PC-9 (cell line): ENCODE measurements at regions of chr17 and their contacts with region 1.

Region 1: DNA sequence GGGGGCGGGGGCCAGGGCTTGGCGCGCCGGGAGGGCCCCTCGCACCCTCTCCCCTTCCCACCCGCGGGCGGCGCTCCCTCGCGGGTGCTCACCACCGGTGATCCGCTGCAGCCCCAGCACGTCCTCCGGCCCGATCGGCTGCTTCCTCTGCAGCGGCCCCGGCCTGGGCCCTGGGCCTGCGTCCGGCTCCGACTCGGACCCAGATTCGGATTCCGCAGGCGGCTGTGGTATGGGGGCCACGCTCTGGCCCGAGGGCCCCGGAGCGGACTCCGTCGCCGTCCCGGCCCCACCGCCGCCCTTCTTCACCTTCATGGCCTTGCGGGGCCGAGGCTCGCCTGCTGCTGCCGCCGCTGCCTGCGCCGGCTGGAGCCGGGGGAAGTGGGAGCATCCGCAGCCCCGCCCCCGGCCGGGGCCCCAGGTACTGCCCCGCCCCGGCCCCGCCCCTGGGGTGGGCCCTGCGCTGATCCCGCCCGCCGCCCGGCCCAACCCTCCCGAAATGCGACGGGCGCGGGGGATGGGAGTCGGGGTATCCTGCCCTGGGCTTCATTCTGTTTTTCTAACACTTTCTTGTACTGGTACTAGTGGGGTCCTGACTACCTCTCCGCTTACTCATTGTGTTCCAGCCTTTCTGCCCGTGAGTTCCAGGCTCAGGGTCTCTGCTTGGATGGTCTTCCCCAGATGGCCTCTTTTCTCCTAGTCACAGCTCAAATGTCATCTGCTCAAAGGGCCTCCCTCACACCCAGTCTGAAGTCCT is at the start of gene UNC119:
- DNase-seq: peak in 1 of 2 experiments; percentile 78
- H3K4me3 ChIP-seq: peak within 1 kb of the TSS; percentile 74
- H3K27ac ChIP-seq: no peak within 1 kb of the TSS
- H3K4me1 ChIP-seq: peaks cover 7% of the 10 kb centered on the region; the same call in 1 of the 2 replicates
- H3K27me3 ChIP-seq: no peaks in the 10 kb centered on the region
- CTCF ChIP-seq: no peak
- total RNA-seq, gene UNC119: 39.7 and 48.8 TPM in 2 replicates

Region 2: DNA sequence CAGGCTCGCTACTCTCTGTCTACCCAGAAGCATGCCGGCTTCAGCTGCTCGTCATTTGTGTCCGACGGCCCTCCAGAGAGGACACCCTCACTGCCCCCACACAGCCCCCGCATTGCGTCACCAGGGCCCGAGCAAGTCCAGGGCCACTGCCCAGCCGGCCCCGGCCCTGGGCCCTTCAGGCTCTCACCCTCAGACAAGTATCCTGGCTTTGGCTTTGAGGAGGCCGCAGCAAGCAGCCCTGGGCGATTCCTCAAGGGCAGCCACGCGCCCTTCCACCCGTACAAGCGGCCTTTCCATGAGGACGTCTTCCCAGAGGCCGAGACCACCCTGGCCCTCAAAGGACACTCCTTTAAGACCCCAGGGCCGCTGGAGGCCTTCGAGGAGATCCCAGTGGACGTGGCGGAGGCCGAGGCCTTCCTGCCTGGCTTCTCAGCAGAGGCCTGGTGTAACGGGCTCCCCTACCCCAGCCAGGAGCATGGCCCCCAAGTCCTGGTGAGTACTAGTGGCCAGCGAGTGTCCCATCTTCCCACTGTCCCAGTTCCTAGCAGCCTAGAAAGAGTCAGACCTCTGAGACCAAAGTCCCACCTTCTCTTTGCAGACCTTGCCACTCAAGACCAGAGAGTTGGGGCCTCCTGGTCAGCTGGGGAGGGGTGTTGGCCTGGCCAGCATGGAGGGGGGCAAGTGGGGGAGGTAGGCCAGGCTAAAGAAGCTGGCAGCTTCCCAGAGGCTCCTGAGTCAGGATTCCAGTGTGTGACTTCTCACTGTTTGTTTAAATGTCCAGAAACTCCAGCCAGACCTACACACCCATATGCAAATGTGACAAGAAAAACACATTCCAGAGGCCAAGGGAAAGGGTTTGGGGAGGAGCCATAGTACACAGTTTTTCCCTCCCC is 27.7 kb before region 1 on chr17:
- CTCF ChIA-PET with region 1: interaction called, 12 read pairs
- POLR2A ChIA-PET with region 1: no interaction called
- intact Hi-C with region 1: no loop called
- DNase-seq: peak; percentile 64 to 77
- H3K4me3 ChIP-seq: no peak overlapping the region
- H3K27ac ChIP-seq: no peak overlapping the region
- H3K4me1 ChIP-seq: peaks cover 32% of the 10 kb centered on the region
- H3K27me3 ChIP-seq: no peaks in the 10 kb centered on the region; the same call in 1 of the 2 replicates
- CTCF ChIP-seq: no peak

Region 3: DNA sequence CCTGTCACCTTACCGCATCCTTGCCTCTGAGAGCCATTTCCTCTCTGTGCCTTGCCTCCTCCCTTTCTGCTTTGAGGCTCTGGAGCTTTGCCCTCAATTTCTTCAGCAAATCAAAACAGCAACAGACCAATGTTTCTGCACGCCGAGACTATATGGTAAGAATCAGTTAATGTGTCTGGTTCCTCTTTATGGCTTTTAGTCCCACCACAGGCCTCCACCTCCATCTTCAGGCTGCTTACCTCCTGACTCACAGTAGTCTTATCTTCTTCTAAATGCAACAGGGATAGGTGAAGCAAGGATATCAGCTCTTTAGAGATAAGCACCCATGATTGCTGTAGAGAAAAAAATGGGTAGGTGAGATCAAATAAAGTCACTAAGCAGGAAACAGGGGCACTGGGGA is 33.4 kb after region 1 on chr17:
- CTCF ChIA-PET with region 1: no interaction called
- POLR2A ChIA-PET with region 1: interaction called, 12 read pairs
- intact Hi-C with region 1: no loop called
- DNase-seq: no peak
- H3K4me3 ChIP-seq: no peak overlapping the region
- H3K27ac ChIP-seq: no peak overlapping the region
- H3K4me1 ChIP-seq: no peaks in the 10 kb centered on the region
- H3K27me3 ChIP-seq: no peaks in the 10 kb centered on the region
- CTCF ChIP-seq: no peak

Region 4: DNA sequence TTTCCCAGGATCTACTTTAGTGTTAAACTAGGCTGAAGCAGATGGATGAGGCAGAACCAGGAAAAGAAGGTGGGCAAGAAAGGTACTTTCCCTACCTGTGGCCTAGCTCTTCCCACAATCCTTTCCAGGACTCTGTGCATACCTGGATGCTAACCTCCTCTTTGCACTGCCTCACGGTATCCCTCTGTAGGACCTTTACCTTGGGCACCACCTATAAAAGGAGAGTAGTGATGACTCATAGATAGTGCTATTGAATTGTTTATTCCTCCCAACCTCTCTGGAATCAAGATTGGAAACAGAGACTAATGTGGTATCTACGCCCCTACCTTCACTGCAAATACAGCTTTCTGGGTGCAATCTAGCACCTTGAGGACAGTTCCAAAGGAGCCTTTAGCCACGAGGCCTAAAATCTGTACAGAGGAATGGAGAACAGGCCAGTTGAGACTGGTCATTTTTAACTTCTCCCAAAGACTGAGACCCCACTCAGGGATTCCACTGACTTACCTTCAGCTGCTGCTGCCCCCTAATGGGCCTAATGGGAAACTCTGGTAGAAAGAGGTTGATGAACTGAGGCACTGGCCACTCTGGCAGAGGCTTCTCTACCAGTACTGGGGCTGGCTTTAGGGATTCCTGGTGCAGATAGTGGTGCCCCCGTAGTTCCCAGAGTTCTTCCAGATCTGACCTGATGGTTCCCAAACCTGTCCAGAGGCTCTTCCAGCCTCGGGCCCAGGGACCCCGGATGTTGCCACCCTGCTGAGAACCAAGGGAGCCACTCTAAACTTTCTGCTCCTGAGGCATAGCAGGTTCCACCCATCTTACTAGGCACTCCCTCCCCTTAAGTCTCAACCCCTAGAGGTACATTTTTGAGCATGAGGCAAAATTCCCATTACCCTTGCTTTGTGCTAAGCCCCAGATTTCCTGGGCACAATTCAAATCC is 60.8 kb after region 1 on chr17:
- CTCF ChIA-PET with region 1: interaction called, 11 read pairs
- POLR2A ChIA-PET with region 1: no interaction called
- intact Hi-C with region 1: loop called (anchors 2 kb)
- DNase-seq: peak in 1 of 2 experiments; percentile 25
- H3K4me3 ChIP-seq: no peak overlapping the region
- H3K27ac ChIP-seq: no peak overlapping the region
- H3K4me1 ChIP-seq: no peaks in the 10 kb centered on the region
- H3K27me3 ChIP-seq: no peaks in the 10 kb centered on the region
- CTCF ChIP-seq: peak; percentile 66